ENCODE measurements at regions of chr22 and their contacts with region 1.

Region 1: GRCh38 chr22:30356449-30357235 is at the starts of genes CCDC157 and SF3A1:
- DNase-seq: peak; percentile 88
- H3K4me3 Mint-ChIP-seq: peak within 1 kb of the TSS; percentile 94
- H3K27ac Mint-ChIP-seq: peak within 1 kb of the TSS; percentile 90
- H3K4me1 Mint-ChIP-seq: peaks cover 43% of the 10 kb centered on the region
- H3K27me3 Mint-ChIP-seq: peaks cover 8% of the 10 kb centered on the region
- total RNA-seq, gene CCDC157: 2.4 and 3.0 TPM in 2 replicates
- total RNA-seq, gene SF3A1: 308 and 310 TPM in 2 replicates

Region 2: GRCh38 chr22:30305519-30305905 is 51.1 kb before region 1 on chr22:
- intact Hi-C with region 1: loop called (anchors 1 kb)
- DNase-seq: peak; percentile 68
- H3K4me3 Mint-ChIP-seq: peak overlapping the region; percentile 77
- H3K27ac Mint-ChIP-seq: peak overlapping the region; percentile 95
- H3K4me1 Mint-ChIP-seq: peaks cover 93% of the 10 kb centered on the region
- H3K27me3 Mint-ChIP-seq: no peaks in the 10 kb centered on the region

Region 3: GRCh38 chr22:30326706-30327362 is 29.8 kb before region 1 on chr22 and contains the start of gene TBC1D10A:
- intact Hi-C with region 1: loop called (anchors 1 kb)
- DNase-seq: peak; percentile 90
- H3K4me3 Mint-ChIP-seq: peak within 1 kb of the TSS; percentile 89
- H3K27ac Mint-ChIP-seq: peak within 1 kb of the TSS; percentile 60
- H3K4me1 Mint-ChIP-seq: peaks cover 48% of the 10 kb centered on the region
- H3K27me3 Mint-ChIP-seq: no peaks in the 10 kb centered on the region
- total RNA-seq, gene TBC1D10A: 17.3 and 24.9 TPM in 2 replicates

Region 4: GRCh38 chr22:30485362-30485988 is 128.8 kb after region 1 on chr22:
- intact Hi-C with region 1: loop called (anchors 1 kb)
- DNase-seq: peak; percentile 70
- H3K4me3 Mint-ChIP-seq: no peak overlapping the region
- H3K27ac Mint-ChIP-seq: no peak overlapping the region
- H3K4me1 Mint-ChIP-seq: no peaks in the 10 kb centered on the region
- H3K27me3 Mint-ChIP-seq: peaks cover 4% of the 10 kb centered on the region

Measured in activated T-helper 1 cell treated with anti-CD3 and anti-CD28 coated beads, Interleukin-12 subunit alpha, Interleukin-12 subunit beta, Interleukin-2, Interleukin-4 antibody, amounts not matched to agents 30 ng/mL and 10 ng/mL and 1 ng/mL, durations not matched to agents 14 hours and 24 hours and 36 hours (primary cell).